ENCODE measurements at regions of chr1 and their contacts with region 1.

Region 1: GRCh38 chr1:66253330-66253921 is 280.5 kb upstream of the SGIP1 start:
- DNase-seq: no peak
- H3K4me3 ChIP-seq: no peak overlapping the region
- H3K27ac ChIP-seq: no peak overlapping the region
- H3K4me1 ChIP-seq: no peaks in the 10 kb centered on the region
- H3K27me3 ChIP-seq: no peaks in the 10 kb centered on the region
- CTCF ChIP-seq: peak; percentile 61

Region 2: DNA sequence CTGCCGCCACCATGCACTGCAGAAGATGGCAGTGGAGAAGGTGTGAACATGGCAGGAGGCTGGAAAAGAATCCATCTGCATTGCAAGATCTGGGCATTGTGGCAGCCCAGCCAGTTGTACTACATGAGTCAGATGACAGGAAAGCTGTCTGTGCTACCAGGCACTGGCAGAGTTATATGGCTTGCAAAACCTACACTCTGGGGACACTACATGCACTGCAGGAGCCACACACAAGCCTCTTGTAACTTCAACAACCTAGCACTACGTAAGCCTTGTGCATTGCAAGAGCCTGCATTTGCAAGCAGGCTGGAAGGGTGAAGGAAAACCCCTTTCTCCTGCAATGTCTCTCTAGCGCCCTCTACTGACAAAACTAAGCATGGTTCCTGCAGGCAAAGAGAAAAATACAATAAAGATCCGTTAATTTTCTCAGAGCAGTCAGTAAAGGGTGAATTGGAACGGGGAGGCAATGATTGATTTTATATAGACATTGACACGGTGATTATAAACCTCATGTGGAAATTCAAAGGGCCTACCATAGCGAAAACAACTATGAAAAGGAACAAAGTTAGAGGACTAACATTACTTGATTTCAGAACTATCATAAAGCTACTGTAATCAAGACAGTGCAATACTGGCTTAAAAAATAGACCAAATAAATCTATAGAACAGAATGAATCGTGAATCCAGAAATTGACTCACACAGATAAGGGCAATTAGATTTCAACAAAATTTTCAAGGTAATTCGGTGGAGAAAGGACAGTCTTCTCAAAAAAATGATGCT is 472.6 kb after region 1 on chr1:
- intact Hi-C with region 1: loop called (anchors 10 kb)
- DNase-seq: peak; percentile 53
- H3K4me3 ChIP-seq: no peak overlapping the region
- H3K27ac ChIP-seq: no peak overlapping the region
- H3K4me1 ChIP-seq: no peaks in the 10 kb centered on the region
- H3K27me3 ChIP-seq: no peaks in the 10 kb centered on the region
- CTCF ChIP-seq: peak; percentile 90